ENCODE measurements at regions of chr3 and their contacts with region 1.

Region 1: DNA sequence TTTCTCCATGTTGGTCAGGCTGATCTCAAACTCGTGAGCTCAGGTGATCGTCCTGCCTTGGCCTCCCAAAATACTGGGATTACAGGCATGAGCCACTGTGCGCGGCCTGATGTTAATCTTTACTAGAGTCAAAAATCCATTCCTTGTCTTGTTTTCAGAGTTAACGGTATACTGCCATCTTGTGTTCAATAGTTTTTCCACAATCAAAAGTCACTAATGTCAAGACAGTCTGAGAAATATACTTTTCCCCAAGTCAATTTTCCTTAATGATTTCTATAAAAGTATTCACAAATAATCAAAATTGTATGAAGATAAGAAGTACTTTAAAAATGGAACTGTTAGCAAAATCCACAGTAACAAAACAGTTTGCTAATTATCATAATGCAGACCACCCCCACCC is 8.5 kb downstream of the CRBN start:
- DNase-seq: peak in 7 of 9 donors; percentile 26 to 56 (median 47)
- ATAC-seq: peak; percentile 73
- H3K4me3 ChIP-seq: no peak overlapping the region
- H3K4me3 Mint-ChIP-seq: peak overlapping the region in 9 of 10 donors; percentile 20 to 91 (median 53)
- H3K27ac ChIP-seq: peak overlapping the region; percentile 87
- H3K27ac Mint-ChIP-seq: peak overlapping the region; percentile 35 to 98 (median 94)
- H3K4me1 ChIP-seq: peaks cover 24 to 50% of the 10 kb centered on the region in 2 donors
- H3K4me1 Mint-ChIP-seq: peaks cover 41 to 94% (median 73%) of the 10 kb centered on the region in 7 donors
- H3K27me3 ChIP-seq: no peaks in the 10 kb centered on the region
- H3K27me3 Mint-ChIP-seq: no peaks in the 10 kb centered on the region

Region 2: DNA sequence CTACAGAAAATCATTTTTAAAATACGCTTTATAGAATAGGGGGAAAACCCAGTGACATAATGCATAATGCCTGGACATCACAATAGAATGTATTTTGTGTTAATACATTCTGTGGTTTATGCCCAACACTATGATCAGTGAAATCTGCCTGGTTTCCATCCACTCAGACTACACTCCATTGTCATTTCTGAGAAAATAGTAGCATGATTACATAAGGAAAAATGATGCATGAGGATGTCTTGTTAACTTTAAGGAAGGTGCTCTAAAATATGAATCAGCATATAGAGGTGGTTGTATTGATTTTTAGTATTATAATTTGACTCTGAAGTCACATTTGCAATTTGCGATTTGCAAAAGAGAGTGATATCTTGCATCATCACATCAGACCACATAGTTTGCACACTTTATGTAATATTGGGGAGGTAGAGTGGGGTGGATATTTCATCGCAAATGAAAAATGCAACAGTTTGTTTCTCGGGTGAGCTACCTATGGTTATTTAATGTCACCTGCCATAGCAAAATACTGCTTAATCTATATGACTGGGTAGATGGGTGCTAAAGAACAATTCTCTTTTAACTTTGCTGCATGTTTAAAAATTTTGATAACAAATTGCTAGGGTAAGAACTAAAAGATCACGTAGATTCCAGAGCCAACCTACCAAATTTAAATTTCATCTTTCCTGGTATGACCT is 464.7 kb before region 1 on chr3:
- CTCF ChIA-PET with region 1: no interaction called
- POLR2A ChIA-PET with region 1: no interaction called
- intact Hi-C with region 1: loop called in 1 of 2 experiments (anchors 5 kb)
- DNase-seq: no peak
- ATAC-seq: no peak
- H3K4me3 ChIP-seq: no peak overlapping the region
- H3K4me3 Mint-ChIP-seq: no peak overlapping the region
- H3K27ac ChIP-seq: no peak overlapping the region
- H3K27ac Mint-ChIP-seq: no peak overlapping the region
- H3K4me1 ChIP-seq: no peaks in the 10 kb centered on the region
- H3K4me1 Mint-ChIP-seq: no peaks in the 10 kb centered on the region
- H3K27me3 ChIP-seq: no peaks in the 10 kb centered on the region
- H3K27me3 Mint-ChIP-seq: peaks cover 0 to 13% (median 6%) of the 10 kb centered on the region in 5 donors

Region 3: GRCh38 chr3:2921903-2922302 is 249.1 kb before region 1 on chr3:
- CTCF ChIA-PET with region 1: no interaction called
- POLR2A ChIA-PET with region 1: no interaction called
- intact Hi-C with region 1: loop called in 1 of 2 experiments (anchors 1 kb)
- DNase-seq: no peak
- ATAC-seq: peak; percentile 45
- H3K4me3 ChIP-seq: no peak overlapping the region
- H3K4me3 Mint-ChIP-seq: no peak overlapping the region
- H3K27ac ChIP-seq: no peak overlapping the region
- H3K27ac Mint-ChIP-seq: no peak overlapping the region
- H3K4me1 ChIP-seq: no peaks in the 10 kb centered on the region
- H3K4me1 Mint-ChIP-seq: peaks cover 0 to 2% (median 0%) of the 10 kb centered on the region in 7 donors
- H3K27me3 ChIP-seq: no peaks in the 10 kb centered on the region
- H3K27me3 Mint-ChIP-seq: peaks cover 0 to 4% (median 0%) of the 10 kb centered on the region in 5 donors

Region 4: GRCh38 chr3:3154879-3155610 is 16.0 kb before region 1 on chr3:
- CTCF ChIA-PET with region 1: interaction called, 6 read pairs
- POLR2A ChIA-PET with region 1: interaction called, 6 read pairs
- intact Hi-C with region 1: loop called in 1 of 2 experiments (anchors 2 kb)
- DNase-seq: no peak
- ATAC-seq: no peak
- H3K4me3 ChIP-seq: no peak overlapping the region
- H3K4me3 Mint-ChIP-seq: no peak overlapping the region
- H3K27ac ChIP-seq: peak overlapping the region; percentile 37
- H3K27ac Mint-ChIP-seq: peak overlapping the region; percentile 15 to 89 (median 76)
- H3K4me1 ChIP-seq: peaks cover 4 to 7% of the 10 kb centered on the region in 2 donors
- H3K4me1 Mint-ChIP-seq: peaks cover 10 to 86% (median 55%) of the 10 kb centered on the region in 7 donors
- H3K27me3 ChIP-seq: no peaks in the 10 kb centered on the region
- H3K27me3 Mint-ChIP-seq: no peaks in the 10 kb centered on the region

Region 5: GRCh38 chr3:3191675-3192285 is 20.8 kb after region 1 on chr3:
- CTCF ChIA-PET with region 1: interaction called, 6 read pairs
- POLR2A ChIA-PET with region 1: interaction called, 10 read pairs
- intact Hi-C with region 1: no loop called
- DNase-seq: peak in 7 of 9 donors; percentile 25 to 58 (median 44)
- ATAC-seq: peak; percentile 89
- H3K4me3 ChIP-seq: peak overlapping the region; percentile 18
- H3K4me3 Mint-ChIP-seq: peak overlapping the region; percentile 54 to 92 (median 78)
- H3K27ac ChIP-seq: peak overlapping the region; percentile 66
- H3K27ac Mint-ChIP-seq: peak overlapping the region; percentile 39 to 98 (median 91)
- H3K4me1 ChIP-seq: peaks cover 20 to 42% of the 10 kb centered on the region in 2 donors
- H3K4me1 Mint-ChIP-seq: peaks cover 27 to 65% (median 60%) of the 10 kb centered on the region in 7 donors
- H3K27me3 ChIP-seq: no peaks in the 10 kb centered on the region
- H3K27me3 Mint-ChIP-seq: peaks cover 0 to 21% (median 0%) of the 10 kb centered on the region in 5 donors

Region 6: DNA sequence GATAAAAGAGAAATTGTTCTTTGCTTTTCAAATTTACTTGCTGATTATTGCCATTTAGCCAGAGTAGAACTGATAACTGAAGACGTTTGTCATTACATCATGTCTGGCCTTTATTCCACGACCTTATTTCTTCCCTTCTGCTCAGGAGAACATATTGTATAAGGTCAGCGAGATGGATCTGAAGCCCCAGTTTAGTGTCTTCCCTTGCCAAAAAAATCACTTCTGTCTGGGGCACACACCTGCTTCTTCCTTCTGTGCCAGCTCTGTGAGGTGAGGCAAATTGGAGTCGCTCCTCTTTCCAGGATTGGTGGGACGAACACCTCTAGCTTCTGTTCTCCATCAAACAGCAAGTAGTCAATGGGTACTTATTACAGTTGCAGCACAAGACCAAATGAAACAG is 258.8 kb after region 1 on chr3:
- CTCF ChIA-PET with region 1: no interaction called
- POLR2A ChIA-PET with region 1: no interaction called
- intact Hi-C with region 1: no loop called
- DNase-seq: no peak
- ATAC-seq: no peak
- H3K4me3 ChIP-seq: no peak overlapping the region
- H3K4me3 Mint-ChIP-seq: no peak overlapping the region
- H3K27ac ChIP-seq: no peak overlapping the region
- H3K27ac Mint-ChIP-seq: no peak overlapping the region
- H3K4me1 ChIP-seq: no peaks in the 10 kb centered on the region
- H3K4me1 Mint-ChIP-seq: no peaks in the 10 kb centered on the region
- H3K27me3 ChIP-seq: no peaks in the 10 kb centered on the region
- H3K27me3 Mint-ChIP-seq: peaks cover 0 to 18% (median 4%) of the 10 kb centered on the region in 5 donors

Measured in naive thymus-derived CD4-positive, alpha-beta T cell (primary cell).